SK-N-SH (cell line): ENCODE measurements at regions of chr13 and their contacts with region 1.

Region 1: DNA sequence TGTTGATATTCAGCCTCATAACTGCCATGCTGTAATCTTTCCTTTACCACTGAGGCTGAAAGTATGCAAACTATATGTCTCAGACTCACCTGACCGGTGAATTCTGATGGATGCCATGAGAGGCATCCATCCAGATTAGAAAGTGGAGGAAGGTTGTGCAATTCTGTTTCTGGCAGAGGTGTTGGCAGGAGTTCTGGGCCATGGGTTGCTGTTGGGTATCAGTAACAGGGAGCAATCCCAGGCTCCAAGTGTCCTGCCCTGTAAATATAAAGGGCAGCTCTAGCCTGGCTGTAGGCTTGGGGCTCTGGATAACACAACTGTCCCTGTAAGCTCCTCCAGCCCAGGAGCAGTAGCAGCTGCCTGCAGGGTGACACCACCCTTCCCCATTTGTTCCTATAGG is 77.4 kb upstream of the ABCC4 start:
- DNase-seq: no peak
- H3K4me3 ChIP-seq: no peak overlapping the region
- H3K27ac ChIP-seq: no peak overlapping the region
- H3K4me1 ChIP-seq: peaks cover 0 to 2% of the 10 kb centered on the region in 2 experiments; a peak in 1 of 4 replicates
- H3K27me3 ChIP-seq: no peaks in the 10 kb centered on the region; the same call in 1 of the 2 replicates
- CTCF ChIP-seq: no peak
- EP300 ChIP-seq: no peak
- RAD21 ChIP-seq: no peak

Region 2: DNA sequence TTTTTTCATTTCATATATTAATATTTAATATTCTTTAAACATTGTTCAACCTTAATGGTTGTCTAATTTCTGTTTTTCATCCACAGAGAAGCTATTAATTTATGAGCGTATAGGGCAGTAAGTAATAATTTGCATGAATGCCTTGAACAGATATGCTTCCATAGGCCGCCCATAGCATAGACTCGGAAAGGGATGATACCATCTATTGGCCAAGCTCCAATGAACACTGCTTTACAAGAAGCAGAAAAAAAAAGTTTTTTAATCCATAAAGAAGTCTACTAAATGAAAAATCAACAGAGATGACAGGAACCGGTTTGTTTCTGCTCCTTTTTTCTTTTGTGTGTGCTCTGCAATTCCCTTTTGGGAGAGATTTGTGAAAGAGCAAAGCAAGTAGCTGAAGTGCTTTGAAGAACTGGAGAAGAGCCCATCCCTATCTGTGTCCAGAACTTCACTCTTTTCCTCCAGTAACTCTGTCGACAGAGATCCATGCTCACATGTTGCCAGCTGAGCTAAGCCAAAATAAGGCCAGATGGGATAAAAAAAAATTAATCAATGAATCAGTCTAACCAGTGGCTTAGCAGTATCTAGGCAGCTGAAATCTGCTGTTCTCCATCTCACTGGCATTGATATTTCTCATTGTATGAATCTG is 450.4 kb before region 1 on chr13:
- CTCF ChIA-PET with region 1: no interaction called
- POLR2A ChIA-PET with region 1: no interaction called
- DNase-seq: peak; percentile 24
- H3K4me3 ChIP-seq: no peak overlapping the region
- H3K27ac ChIP-seq: no peak overlapping the region
- H3K4me1 ChIP-seq: no peaks in the 10 kb centered on the region
- H3K27me3 ChIP-seq: no peaks in the 10 kb centered on the region
- CTCF ChIP-seq: no peak
- EP300 ChIP-seq: no peak
- RAD21 ChIP-seq: no peak

Region 3: DNA sequence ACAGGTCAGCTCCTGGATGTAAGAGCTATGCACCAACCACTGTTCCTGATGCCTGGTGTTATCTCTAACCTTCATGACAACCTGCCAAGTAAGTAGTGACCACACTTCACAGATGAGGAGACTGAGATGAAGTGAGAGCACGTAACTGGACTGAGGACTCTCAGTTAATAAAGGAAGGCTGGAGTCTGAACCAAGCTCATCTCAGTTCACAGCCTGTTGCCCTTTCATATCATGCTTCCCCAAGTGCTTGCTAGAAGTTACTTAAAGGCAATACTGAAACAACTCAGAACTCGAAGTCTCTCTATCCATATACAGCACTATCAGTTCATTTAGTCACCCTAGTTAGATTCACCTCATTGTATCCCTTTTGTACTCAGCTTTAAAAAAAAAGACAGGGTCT is 197.0 kb before region 1 on chr13:
- CTCF ChIA-PET with region 1: interaction called, 23 read pairs
- POLR2A ChIA-PET with region 1: no interaction called
- DNase-seq: no peak
- H3K4me3 ChIP-seq: no peak overlapping the region
- H3K27ac ChIP-seq: no peak overlapping the region
- H3K4me1 ChIP-seq: no peaks in the 10 kb centered on the region; a peak in 1 of 4 replicates
- H3K27me3 ChIP-seq: no peaks in the 10 kb centered on the region
- CTCF ChIP-seq: no peak
- EP300 ChIP-seq: no peak
- RAD21 ChIP-seq: no peak

Region 4: GRCh38 chr13:95201814-95202651 is 176.6 kb before region 1 on chr13:
- CTCF ChIA-PET with region 1: interaction called, 10 read pairs
- POLR2A ChIA-PET with region 1: no interaction called
- DNase-seq: peak; percentile 14
- H3K4me3 ChIP-seq: no peak overlapping the region
- H3K27ac ChIP-seq: no peak overlapping the region
- H3K4me1 ChIP-seq: peaks cover 0 to 6% of the 10 kb centered on the region in 2 experiments; a peak in 1 of 4 replicates
- H3K27me3 ChIP-seq: no peaks in the 10 kb centered on the region
- CTCF ChIP-seq: no peak
- EP300 ChIP-seq: no peak
- RAD21 ChIP-seq: peak; percentile 9; the same call in 1 of the 2 replicates

Region 5: GRCh38 chr13:95207769-95208366 is 170.7 kb before region 1 on chr13:
- CTCF ChIA-PET with region 1: interaction called, 10 read pairs
- POLR2A ChIA-PET with region 1: no interaction called
- DNase-seq: peak; percentile 79
- H3K4me3 ChIP-seq: no peak overlapping the region; a peak in 1 of 4 replicates
- H3K27ac ChIP-seq: peak overlapping the region in 1 of 2 experiments; percentile 87; a peak in 2 of 4 replicates
- H3K4me1 ChIP-seq: peaks cover 0 to 9% of the 10 kb centered on the region in 2 experiments; a peak in 2 of 4 replicates
- H3K27me3 ChIP-seq: no peaks in the 10 kb centered on the region
- CTCF ChIP-seq: no peak
- EP300 ChIP-seq: peak in 1 of 2 experiments; percentile 80; a peak in 2 of 4 replicates
- RAD21 ChIP-seq: no peak

Region 6: DNA sequence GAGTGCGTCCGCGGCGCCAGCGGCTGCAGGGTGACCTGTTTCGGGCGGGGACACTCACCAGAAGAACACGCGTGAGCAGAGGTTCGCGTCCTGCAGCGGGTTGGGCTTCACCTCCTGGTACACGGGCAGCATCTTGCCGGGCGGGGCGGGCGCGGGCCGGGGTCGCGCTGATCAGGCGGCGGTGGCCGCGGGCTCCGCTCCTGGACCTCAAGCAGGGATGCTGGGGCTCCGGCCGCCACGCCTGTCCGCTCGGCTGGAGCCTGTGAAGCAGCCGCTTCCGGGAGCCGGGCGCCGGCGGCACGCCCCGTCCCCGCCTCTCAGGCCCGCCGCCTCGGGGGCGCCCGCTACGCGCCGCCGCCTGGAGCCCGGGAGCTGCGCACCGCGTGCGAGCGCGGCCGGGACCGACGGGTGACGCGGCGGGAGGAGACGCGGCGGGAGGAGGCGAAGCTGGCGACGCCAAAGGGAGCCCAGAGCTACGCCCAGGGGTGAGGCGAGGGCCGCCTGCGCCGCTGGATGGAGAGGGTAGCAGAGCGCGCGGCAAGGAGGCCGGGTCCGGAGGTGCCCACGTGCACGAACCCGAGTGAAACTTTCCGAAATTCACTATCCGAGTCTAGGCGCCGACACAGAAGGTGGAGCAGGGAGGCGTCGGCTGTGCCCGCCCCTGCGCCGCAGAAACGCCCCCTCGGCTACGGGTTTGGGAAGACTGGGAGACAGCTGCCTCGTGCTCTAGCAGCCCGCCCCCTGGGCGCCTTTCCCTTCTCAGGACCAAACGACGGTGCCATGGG is 77.2 kb before region 1 on chr13 and contains the start of gene ABCC4:
- CTCF ChIA-PET with region 1: interaction called, 157 read pairs
- POLR2A ChIA-PET with region 1: interaction called, 4 read pairs
- DNase-seq: peak; percentile 91
- H3K4me3 ChIP-seq: peak within 1 kb of the TSS; percentile 66 to 95
- H3K27ac ChIP-seq: peak within 1 kb of the TSS; percentile 58 to 61
- H3K4me1 ChIP-seq: peaks cover 0 to 6% of the 10 kb centered on the region in 2 experiments; a peak in 1 of 4 replicates
- H3K27me3 ChIP-seq: no peaks in the 10 kb centered on the region
- CTCF ChIP-seq: no peak; the same call in 1 of the 2 replicates
- EP300 ChIP-seq: no peak
- RAD21 ChIP-seq: no peak
- polyA plus RNA-seq, gene ABCC4: 7.8 and 10.3 TPM in 2 replicates

Region 7: DNA sequence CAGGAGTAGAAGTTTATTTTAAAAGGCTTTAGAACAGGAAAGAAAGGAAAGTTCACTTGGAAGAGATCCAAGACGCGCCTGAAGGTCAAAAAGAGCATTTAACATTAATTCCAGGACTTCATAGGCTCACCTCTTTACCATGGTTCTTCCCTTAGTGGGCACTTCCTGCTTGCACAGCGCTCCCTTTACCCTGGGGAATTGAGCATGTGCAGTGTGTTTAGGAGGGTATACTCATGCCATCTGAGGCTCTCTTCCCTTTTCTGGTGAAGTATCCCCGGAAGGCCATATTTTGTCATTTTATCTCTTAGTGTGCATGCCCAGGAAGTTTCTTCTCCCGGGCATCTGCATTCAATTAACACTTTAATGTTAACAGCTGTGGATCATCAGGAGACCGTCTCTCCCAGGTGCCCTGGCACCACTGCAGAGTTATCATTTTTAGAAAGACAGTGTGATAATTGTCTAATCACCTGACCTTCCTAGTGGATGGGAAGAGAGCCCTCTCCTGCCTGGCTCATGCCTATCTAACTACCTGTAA is 11.2 kb before region 1 on chr13:
- CTCF ChIA-PET with region 1: interaction called, 25 read pairs
- POLR2A ChIA-PET with region 1: no interaction called
- DNase-seq: peak; percentile 34
- H3K4me3 ChIP-seq: no peak overlapping the region
- H3K27ac ChIP-seq: peak overlapping the region in 1 of 2 experiments; percentile 4; a peak in 1 of 4 replicates
- H3K4me1 ChIP-seq: peaks cover 0 to 6% of the 10 kb centered on the region in 2 experiments; a peak in 2 of 4 replicates
- H3K27me3 ChIP-seq: no peaks in the 10 kb centered on the region
- CTCF ChIP-seq: no peak
- EP300 ChIP-seq: peak in 1 of 2 experiments; percentile 63; a peak in 1 of 4 replicates
- RAD21 ChIP-seq: no peak

Region 8: GRCh38 chr13:95474992-95475391 is 96.4 kb after region 1 on chr13:
- CTCF ChIA-PET with region 1: interaction called, 10 read pairs
- POLR2A ChIA-PET with region 1: no interaction called
- DNase-seq: no peak
- H3K4me3 ChIP-seq: no peak overlapping the region
- H3K27ac ChIP-seq: no peak overlapping the region
- H3K4me1 ChIP-seq: peaks cover 0 to 4% of the 10 kb centered on the region in 2 experiments; a peak in 1 of 4 replicates
- H3K27me3 ChIP-seq: no peaks in the 10 kb centered on the region
- CTCF ChIP-seq: no peak
- EP300 ChIP-seq: no peak
- RAD21 ChIP-seq: no peak

Region 9: DNA sequence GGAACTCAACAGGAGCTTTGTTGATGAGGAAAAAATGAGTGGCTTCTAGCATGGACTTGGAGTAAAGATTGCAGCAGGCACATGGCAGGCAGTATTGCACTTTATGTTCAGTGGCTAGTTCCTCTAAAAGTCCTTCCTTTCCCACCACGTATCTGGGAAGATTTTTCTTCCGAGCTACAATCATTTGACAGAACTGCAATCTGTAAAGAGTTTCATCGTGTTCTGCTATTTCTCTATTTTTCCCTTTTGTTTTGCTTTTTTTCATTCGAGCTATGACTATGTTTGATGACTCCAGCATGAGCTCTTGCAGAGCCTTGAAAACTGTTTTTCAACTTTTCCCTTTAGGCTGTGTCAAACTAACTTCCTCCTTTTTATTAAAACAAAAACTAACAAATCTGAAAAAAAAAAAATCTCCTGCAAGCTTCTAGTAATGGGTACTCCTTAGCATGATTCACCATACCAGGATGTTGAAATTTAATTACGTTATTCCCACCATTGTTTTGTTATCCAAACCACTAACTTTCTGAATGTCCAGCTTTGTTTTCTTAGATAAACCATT is 186.2 kb after region 1 on chr13:
- CTCF ChIA-PET with region 1: no interaction called
- POLR2A ChIA-PET with region 1: no interaction called
- DNase-seq: no peak
- H3K4me3 ChIP-seq: no peak overlapping the region
- H3K27ac ChIP-seq: no peak overlapping the region
- H3K4me1 ChIP-seq: no peaks in the 10 kb centered on the region
- H3K27me3 ChIP-seq: no peaks in the 10 kb centered on the region
- CTCF ChIP-seq: no peak
- EP300 ChIP-seq: no peak
- RAD21 ChIP-seq: no peak